Right lobe of liver (tissue), 6 donors: ENCODE measurements at regions of chr9 and their contacts with region 1.

Region 1: GRCh38 chr9:36407122-36407723 is 7.2 kb upstream of the RNF38 start:
- DNase-seq: peak in 2 of 3 donors; percentile 29 to 59
- ATAC-seq: peak; percentile 89 to 95 (median 94)
- H3K4me3 ChIP-seq: no peak overlapping the region
- H3K27ac ChIP-seq: no peak overlapping the region
- H3K4me1 ChIP-seq: peaks cover 0 to 7% (median 3%) of the 10 kb centered on the region in 4 donors
- H3K27me3 ChIP-seq: no peaks in the 10 kb centered on the region
- CTCF ChIP-seq: peak; percentile 78 to 98 (median 88)
- POLR2A ChIP-seq: no peak

Region 2: GRCh38 chr9:36441966-36442365 is 34.7 kb after region 1 on chr9:
- intact Hi-C with region 1: loop called in 1 of 2 experiments (anchors 5 kb)
- DNase-seq: no peak
- ATAC-seq: peak in 1 of 4 donors; percentile 64
- H3K4me3 ChIP-seq: no peak overlapping the region
- H3K27ac ChIP-seq: no peak overlapping the region
- H3K4me1 ChIP-seq: no peaks in the 10 kb centered on the region
- H3K27me3 ChIP-seq: no peaks in the 10 kb centered on the region
- CTCF ChIP-seq: no peak
- POLR2A ChIP-seq: no peak

Region 3: GRCh38 chr9:36450110-36450732 is 43.0 kb after region 1 on chr9:
- intact Hi-C with region 1: loop called (anchors 5 kb)
- DNase-seq: no peak
- ATAC-seq: peak; percentile 66 to 74 (median 72)
- H3K4me3 ChIP-seq: no peak overlapping the region
- H3K27ac ChIP-seq: no peak overlapping the region
- H3K4me1 ChIP-seq: peaks cover 0 to 9% (median 0%) of the 10 kb centered on the region in 4 donors
- H3K27me3 ChIP-seq: no peaks in the 10 kb centered on the region
- CTCF ChIP-seq: peak; percentile 71 to 79 (median 74)
- POLR2A ChIP-seq: no peak